ENCODE measurements at regions of chr9 and their contacts with region 1.

Region 1: DNA sequence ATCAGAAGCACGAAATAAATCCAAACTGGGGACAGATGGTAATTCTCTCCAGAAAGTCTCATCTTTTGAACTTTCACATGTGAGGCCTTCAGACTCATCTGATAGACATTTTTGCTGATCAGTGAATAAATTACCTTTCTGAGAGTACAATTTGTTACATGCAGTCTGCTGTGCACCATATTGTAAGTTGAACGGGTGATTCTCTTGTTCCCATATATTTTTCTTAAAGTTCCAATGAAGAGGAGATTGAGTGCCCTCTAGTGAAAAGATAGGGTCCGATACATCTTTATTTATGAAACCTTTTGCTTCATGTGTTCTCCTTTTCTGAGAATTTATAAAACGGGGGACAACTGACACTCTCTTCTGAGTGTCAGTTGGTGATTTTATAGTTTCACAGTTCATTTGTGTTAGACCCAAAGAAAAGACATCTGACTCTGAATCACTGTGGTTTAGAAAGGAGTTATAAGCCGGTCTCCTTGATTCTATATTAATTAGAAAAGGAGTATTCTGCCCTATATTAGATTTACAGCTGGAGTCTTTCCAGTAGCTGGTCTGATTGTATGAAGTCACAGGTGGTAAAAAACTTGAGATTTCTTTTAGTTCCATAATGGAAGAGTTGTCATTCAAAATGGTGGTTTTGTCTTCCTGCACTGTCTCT is 30.4 kb downstream of the GNG10 start:
- DNase-seq: peak; percentile 49

Region 2: GRCh38 chr9:111601237-111602018 is 90.4 kb before region 1 on chr9:
- in situ Hi-C with region 1: loop called (anchors 5 kb)
- DNase-seq: no peak

Region 3: DNA sequence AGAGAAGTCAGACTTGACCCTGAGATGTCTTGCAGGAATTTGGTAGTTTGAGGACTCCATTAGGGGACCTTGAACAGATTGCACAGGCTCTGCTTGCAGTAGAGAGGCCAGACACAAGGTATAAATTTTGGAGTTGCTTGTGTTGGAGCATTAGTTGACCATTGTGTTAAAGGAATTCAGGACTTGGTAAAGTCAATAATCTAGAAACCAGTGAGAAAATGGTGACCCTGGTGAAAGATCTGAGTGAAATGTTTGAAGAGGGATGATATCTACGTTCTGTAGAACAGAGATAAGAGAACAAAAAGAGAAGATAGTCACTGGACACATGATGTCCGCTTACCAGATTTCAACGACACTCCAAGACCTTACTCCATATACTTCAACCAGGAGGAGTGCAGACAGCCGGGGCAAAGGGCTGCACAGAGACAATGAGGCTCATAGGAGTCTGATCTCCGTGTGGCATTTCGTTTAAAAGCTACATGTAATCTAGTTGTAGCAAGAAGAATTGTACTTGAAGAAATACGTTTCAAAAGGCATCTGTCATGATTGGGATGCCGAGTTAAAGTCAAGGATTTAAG is 47.5 kb before region 1 on chr9:
- in situ Hi-C with region 1: no loop called
- DNase-seq: no peak